Activated CD8-positive, alpha-beta T cell treated with anti-CD3 and anti-CD28 coated beads, Interleukin-2, amount 10 ng/mL, durations not matched to agents 7 days and 5 days (primary cell): ENCODE measurements at regions of chr1 and their contacts with region 1.

Region 1: GRCh38 chr1:172745014-172745413 is 86.1 kb downstream of the FASLG start:
- DNase-seq: peak; percentile 70
- ATAC-seq: peak; percentile 62
- H3K4me3 Mint-ChIP-seq: no peak overlapping the region
- H3K27ac Mint-ChIP-seq: no peak overlapping the region
- H3K4me1 Mint-ChIP-seq: peaks cover 44% of the 10 kb centered on the region
- H3K27me3 Mint-ChIP-seq: peaks cover 23% of the 10 kb centered on the region

Region 2: GRCh38 chr1:172588296-172589291 is 156.4 kb before region 1 on chr1:
- CTCF ChIA-PET with region 1: no interaction called
- POLR2A ChIA-PET with region 1: no interaction called
- DNase-seq: no peak
- ATAC-seq: no peak
- H3K4me3 Mint-ChIP-seq: no peak overlapping the region
- H3K27ac Mint-ChIP-seq: no peak overlapping the region
- H3K4me1 Mint-ChIP-seq: peaks cover 11% of the 10 kb centered on the region
- H3K27me3 Mint-ChIP-seq: no peaks in the 10 kb centered on the region

Region 3: GRCh38 chr1:172761581-172762025 is 16.6 kb after region 1 on chr1:
- CTCF ChIA-PET with region 1: interaction called, 11 read pairs
- POLR2A ChIA-PET with region 1: no interaction called
- DNase-seq: no peak
- ATAC-seq: no peak
- H3K4me3 Mint-ChIP-seq: no peak overlapping the region
- H3K27ac Mint-ChIP-seq: no peak overlapping the region
- H3K4me1 Mint-ChIP-seq: peaks cover 25% of the 10 kb centered on the region
- H3K27me3 Mint-ChIP-seq: no peaks in the 10 kb centered on the region

Region 4: GRCh38 chr1:172818841-172819527 is 74.0 kb after region 1 on chr1:
- CTCF ChIA-PET with region 1: interaction called, 48 read pairs
- POLR2A ChIA-PET with region 1: interaction called, 3 read pairs
- DNase-seq: peak; percentile 60
- ATAC-seq: peak; percentile 80
- H3K4me3 Mint-ChIP-seq: peak overlapping the region; percentile 53
- H3K27ac Mint-ChIP-seq: peak overlapping the region; percentile 93
- H3K4me1 Mint-ChIP-seq: peaks cover 49% of the 10 kb centered on the region
- H3K27me3 Mint-ChIP-seq: no peaks in the 10 kb centered on the region

Region 5: DNA sequence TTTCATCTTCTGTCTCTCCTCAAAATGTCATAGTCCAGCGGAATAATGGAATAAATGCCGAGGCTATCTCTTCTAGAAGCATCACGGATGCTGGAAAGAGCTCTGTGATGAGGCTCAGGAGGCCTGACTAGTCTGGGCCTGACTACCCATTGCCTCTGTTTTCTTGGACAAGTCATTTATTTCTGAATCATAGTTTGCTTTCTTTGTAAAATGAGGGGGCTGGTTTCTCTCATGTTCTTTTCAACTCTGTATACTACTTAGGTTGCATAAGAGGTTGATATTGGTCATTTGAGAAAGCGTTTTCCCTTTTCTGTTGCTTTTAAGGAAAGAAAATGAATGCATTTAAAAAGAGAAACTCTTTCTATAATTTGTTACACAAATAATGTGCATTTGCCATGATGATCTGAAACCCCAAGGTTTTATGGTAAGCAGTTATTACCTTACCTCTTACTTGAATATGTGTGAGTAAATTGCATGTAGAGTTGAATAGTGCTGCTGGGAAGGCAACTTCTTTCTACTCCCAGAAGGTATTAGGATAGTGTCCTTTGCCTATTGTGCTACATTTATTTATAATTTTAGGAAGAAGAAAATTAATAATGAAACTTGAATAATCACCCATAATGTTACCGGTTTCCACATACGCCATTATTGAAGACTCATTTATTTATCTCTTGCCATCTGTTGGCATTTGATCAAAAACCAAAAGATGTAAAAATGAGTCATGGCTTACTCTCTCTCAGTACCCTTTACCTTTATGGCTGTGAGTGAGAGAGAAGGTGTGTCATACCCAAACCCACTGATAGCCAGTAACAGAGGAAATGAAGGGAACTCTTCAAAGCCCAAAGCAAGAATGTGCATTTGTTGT is 93.0 kb after region 1 on chr1:
- CTCF ChIA-PET with region 1: interaction called, 10 read pairs
- POLR2A ChIA-PET with region 1: no interaction called
- DNase-seq: peak; percentile 52
- ATAC-seq: peak; percentile 99
- H3K4me3 Mint-ChIP-seq: peak overlapping the region; percentile 44
- H3K27ac Mint-ChIP-seq: peak overlapping the region; percentile 39
- H3K4me1 Mint-ChIP-seq: peaks cover 52% of the 10 kb centered on the region
- H3K27me3 Mint-ChIP-seq: peaks cover 13% of the 10 kb centered on the region

Region 6: GRCh38 chr1:172914501-172915144 is 169.6 kb after region 1 on chr1:
- CTCF ChIA-PET with region 1: no interaction called
- POLR2A ChIA-PET with region 1: no interaction called
- DNase-seq: no peak
- ATAC-seq: no peak
- H3K4me3 Mint-ChIP-seq: no peak overlapping the region
- H3K27ac Mint-ChIP-seq: no peak overlapping the region
- H3K4me1 Mint-ChIP-seq: peaks cover under 1% of the 10 kb centered on the region
- H3K27me3 Mint-ChIP-seq: peaks cover 3% of the 10 kb centered on the region

Region 7: DNA sequence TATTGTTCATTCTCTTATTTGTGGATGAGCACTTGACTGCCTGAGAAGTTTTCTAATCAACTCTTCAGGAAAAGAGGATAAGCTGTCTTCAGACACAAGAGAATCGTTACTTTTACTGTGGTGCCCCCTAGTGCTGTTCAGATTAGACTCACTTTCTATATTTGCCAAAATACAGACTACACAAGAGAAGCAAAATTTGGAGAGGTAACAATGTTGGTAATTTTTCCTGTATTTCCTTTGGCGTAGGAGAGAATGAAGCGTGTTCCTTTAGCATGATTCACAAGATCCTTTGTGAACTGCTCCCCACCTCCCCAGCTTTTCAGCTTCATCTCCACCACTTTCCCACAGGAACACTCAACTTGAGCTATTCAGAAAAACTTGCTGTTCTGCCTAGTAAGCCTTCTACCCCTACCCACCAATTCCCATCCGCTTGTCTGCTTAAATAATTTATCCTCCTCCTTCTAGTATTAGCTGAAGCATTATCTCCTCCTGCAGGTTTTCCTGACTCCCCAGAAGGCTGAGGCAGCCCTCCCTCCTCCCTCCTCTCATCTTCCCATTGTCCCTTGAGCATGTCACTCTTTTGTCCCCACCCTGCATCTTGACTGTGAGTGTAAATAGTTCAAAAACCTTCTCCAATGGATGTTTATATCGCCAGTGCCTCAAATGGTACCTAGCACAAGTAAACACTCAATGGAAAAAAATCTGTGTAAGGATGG is 457.6 kb after region 1 on chr1:
- CTCF ChIA-PET with region 1: interaction called, 285 read pairs
- POLR2A ChIA-PET with region 1: no interaction called
- DNase-seq: peak; percentile 52
- ATAC-seq: no peak
- H3K4me3 Mint-ChIP-seq: no peak overlapping the region
- H3K27ac Mint-ChIP-seq: no peak overlapping the region
- H3K4me1 Mint-ChIP-seq: peaks cover 50% of the 10 kb centered on the region
- H3K27me3 Mint-ChIP-seq: peaks cover 2% of the 10 kb centered on the region

Region 8: DNA sequence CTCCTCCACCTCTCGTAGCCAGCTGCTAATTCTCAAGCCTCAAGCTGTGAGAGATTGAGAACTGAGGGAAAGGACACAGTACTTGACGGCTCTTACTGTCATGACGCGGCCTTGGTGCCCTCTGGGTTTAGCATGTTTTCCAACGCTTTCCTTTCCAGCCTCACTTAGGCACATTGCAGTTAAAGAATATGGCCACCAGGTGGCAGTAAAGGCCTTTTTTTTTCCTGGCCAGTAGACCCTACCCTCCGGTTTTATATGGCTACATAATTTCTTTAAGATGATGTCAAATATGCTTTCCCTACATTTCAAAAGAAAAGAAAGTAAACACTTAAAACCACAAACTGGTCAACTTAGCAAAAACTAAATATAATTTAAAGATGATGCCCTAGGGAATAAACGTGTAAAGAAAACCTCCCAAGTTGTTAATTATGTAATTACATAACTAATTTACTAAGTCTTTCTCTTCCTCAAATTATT is 675.4 kb after region 1 on chr1:
- CTCF ChIA-PET with region 1: interaction called, 11 read pairs
- POLR2A ChIA-PET with region 1: no interaction called
- DNase-seq: peak; percentile 74
- ATAC-seq: peak; percentile 92
- H3K4me3 Mint-ChIP-seq: no peak overlapping the region
- H3K27ac Mint-ChIP-seq: no peak overlapping the region
- H3K4me1 Mint-ChIP-seq: peaks cover 10% of the 10 kb centered on the region
- H3K27me3 Mint-ChIP-seq: no peaks in the 10 kb centered on the region